Naive thymus-derived CD4-positive, alpha-beta T cell (primary cell): ENCODE measurements at regions of chr7 and their contacts with region 1.

Region 1: DNA sequence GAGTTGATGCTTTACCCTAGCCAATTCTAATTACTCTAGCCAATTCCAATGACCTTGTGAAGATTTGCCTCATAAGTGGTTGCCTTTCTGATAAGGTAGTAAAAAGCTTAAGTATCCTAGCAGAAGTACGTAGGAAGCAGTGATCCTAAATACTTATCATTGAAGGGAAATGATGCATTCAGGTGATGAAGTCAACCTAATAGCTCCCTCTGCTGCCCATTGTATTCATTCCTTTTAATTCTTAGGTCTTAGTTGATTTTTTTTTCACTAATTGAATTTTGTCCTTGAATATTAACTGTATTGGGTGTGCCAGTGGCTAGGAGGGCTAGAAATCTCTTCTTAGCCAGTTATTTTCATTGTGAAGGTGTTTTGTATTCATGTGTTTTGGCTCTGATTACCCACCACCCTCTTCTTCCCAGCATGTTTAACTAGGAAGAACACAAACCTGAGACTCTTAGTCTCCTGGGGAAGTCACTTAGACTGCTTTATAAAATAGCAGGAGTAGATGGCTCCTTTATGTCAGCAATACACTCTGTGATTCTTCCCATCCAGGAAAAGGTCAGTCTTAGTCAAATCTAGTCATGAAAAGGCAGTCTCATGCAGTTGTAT is 46.3 kb downstream of the PLEKHA8 start:
- DNase-seq: peak in 3 of 9 donors; percentile 4 to 16 (median 11)
- ATAC-seq: no peak
- H3K4me3 ChIP-seq: no peak overlapping the region
- H3K4me3 Mint-ChIP-seq: no peak overlapping the region
- H3K27ac ChIP-seq: no peak overlapping the region
- H3K27ac Mint-ChIP-seq: no peak overlapping the region
- H3K4me1 ChIP-seq: no peaks in the 10 kb centered on the region
- H3K4me1 Mint-ChIP-seq: no peaks in the 10 kb centered on the region
- H3K27me3 ChIP-seq: no peaks in the 10 kb centered on the region
- H3K27me3 Mint-ChIP-seq: no peaks in the 10 kb centered on the region

Region 2: DNA sequence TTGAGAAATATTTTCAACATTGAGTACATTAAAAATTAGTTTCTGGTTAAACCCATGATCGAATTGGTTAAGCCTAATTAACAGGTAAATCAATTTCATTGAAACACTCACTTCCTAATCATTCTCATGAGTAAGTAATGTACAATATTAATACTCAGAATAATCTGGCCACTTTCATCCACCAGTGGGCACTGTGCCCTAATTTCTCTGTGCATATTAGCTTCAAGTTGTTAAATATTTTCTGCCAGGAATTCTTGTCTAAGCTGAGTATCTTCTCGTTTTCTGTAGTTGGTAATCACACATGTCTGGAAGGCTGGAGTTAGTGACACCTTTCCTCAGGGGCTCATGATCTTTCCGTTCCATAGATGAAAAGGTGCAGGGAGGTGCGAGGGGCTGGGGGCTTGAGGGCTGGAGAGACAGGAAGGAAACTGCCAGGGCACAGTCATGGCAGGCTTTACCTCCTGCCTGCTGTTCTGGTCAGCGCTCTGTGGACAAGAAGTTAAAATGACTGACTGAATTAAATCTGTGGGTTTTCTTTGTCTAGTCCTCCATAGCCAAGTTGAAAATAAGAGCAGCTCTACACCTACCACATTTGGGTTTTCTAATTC is 196.3 kb before region 1 on chr7:
- CTCF ChIA-PET with region 1: no interaction called
- POLR2A ChIA-PET with region 1: no interaction called
- intact Hi-C with region 1: loop called in 1 of 2 experiments (anchors 1 kb)
- DNase-seq: peak in 4 of 9 donors; percentile 17 to 22 (median 20)
- ATAC-seq: peak; percentile 51
- H3K4me3 ChIP-seq: no peak overlapping the region
- H3K4me3 Mint-ChIP-seq: peak overlapping the region in 1 of 10 donors; percentile 4
- H3K27ac ChIP-seq: no peak overlapping the region
- H3K27ac Mint-ChIP-seq: no peak overlapping the region
- H3K4me1 ChIP-seq: peaks cover 0 to 2% of the 10 kb centered on the region in 2 donors
- H3K4me1 Mint-ChIP-seq: peaks cover 0 to 15% (median 10%) of the 10 kb centered on the region in 7 donors
- H3K27me3 ChIP-seq: no peaks in the 10 kb centered on the region
- H3K27me3 Mint-ChIP-seq: peaks cover 0 to 29% (median 11%) of the 10 kb centered on the region in 5 donors

Region 3: DNA sequence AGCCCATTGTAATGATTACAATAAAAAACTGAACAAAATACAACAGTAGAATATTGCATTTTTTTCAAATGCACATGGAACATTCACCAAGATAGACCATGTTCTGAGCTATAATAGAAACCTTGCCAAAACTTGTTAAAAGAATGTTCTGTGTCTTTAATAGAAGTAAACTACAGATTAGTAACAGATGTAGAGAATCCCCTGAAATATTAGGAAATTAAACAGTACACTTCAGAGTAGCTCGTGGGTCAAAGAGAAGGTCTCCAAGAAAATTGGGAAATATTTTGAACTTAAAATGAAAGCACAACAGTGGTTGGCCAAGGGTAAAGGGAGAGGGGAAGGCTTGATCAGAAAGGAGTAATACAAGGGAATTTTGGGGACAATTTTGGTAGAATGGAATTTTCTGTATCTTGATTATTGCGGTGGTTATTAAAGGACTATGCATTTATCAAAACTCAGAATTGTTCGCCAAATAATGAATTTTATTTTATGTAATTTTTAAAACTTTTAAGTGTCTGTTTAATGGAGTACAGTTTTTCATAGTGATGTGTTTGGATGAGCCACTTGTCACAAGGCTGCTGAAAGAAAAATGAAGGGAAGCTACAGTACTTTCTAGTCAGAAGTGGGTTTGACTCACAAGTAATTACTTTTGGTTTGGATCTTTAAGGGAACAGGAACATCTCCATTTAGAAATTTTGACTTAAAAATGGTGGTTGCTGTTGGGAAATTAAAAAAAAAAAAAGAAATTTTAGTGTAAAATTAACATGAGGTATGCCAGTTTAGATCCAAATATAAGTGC is 36.1 kb before region 1 on chr7:
- CTCF ChIA-PET with region 1: no interaction called
- POLR2A ChIA-PET with region 1: no interaction called
- intact Hi-C with region 1: no loop called
- DNase-seq: no peak
- ATAC-seq: no peak
- H3K4me3 ChIP-seq: no peak overlapping the region
- H3K4me3 Mint-ChIP-seq: peak overlapping the region in 3 of 10 donors; percentile 10 to 46 (median 46)
- H3K27ac ChIP-seq: no peak overlapping the region
- H3K27ac Mint-ChIP-seq: peak overlapping the region in 2 of 9 donors; percentile 23 to 26
- H3K4me1 ChIP-seq: peaks cover 0 to 10% of the 10 kb centered on the region in 2 donors
- H3K4me1 Mint-ChIP-seq: peaks cover 7 to 40% (median 23%) of the 10 kb centered on the region in 7 donors
- H3K27me3 ChIP-seq: no peaks in the 10 kb centered on the region
- H3K27me3 Mint-ChIP-seq: no peaks in the 10 kb centered on the region

Region 4: GRCh38 chr7:30659312-30659711 is 584.8 kb after region 1 on chr7:
- CTCF ChIA-PET with region 1: no interaction called
- POLR2A ChIA-PET with region 1: no interaction called
- intact Hi-C with region 1: no loop called
- DNase-seq: no peak
- ATAC-seq: no peak
- H3K4me3 ChIP-seq: no peak overlapping the region
- H3K4me3 Mint-ChIP-seq: no peak overlapping the region
- H3K27ac ChIP-seq: no peak overlapping the region
- H3K27ac Mint-ChIP-seq: no peak overlapping the region
- H3K4me1 ChIP-seq: no peaks in the 10 kb centered on the region
- H3K4me1 Mint-ChIP-seq: peaks cover 0 to 5% (median 0%) of the 10 kb centered on the region in 7 donors
- H3K27me3 ChIP-seq: no peaks in the 10 kb centered on the region
- H3K27me3 Mint-ChIP-seq: peaks cover 0 to 4% (median 0%) of the 10 kb centered on the region in 5 donors